CD4-positive, alpha-beta T cell (primary cell): ENCODE measurements at regions of chr11 and their contacts with region 1.

Region 1: GRCh38 chr11:6619004-6619745 is at the start of gene TPP1:
- DNase-seq: peak; percentile 73 to 96 (median 84)
- ATAC-seq: peak; percentile 92
- H3K4me3 ChIP-seq: peak within 1 kb of the TSS; percentile 85
- H3K4me3 Mint-ChIP-seq: no peak within 1 kb of the TSS
- H3K27ac ChIP-seq: peak within 1 kb of the TSS; percentile 73 to 94
- H3K27ac Mint-ChIP-seq: no peak within 1 kb of the TSS
- H3K4me1 ChIP-seq: peaks cover 30% of the 10 kb centered on the region
- H3K4me1 Mint-ChIP-seq: peaks cover 8% of the 10 kb centered on the region
- H3K27me3 ChIP-seq: no peaks in the 10 kb centered on the region
- H3K27me3 Mint-ChIP-seq: no peaks in the 10 kb centered on the region
- CTCF ChIP-seq: no peak
- total RNA-seq, gene TPP1: 29.7 to 34.4 TPM

Region 2: DNA sequence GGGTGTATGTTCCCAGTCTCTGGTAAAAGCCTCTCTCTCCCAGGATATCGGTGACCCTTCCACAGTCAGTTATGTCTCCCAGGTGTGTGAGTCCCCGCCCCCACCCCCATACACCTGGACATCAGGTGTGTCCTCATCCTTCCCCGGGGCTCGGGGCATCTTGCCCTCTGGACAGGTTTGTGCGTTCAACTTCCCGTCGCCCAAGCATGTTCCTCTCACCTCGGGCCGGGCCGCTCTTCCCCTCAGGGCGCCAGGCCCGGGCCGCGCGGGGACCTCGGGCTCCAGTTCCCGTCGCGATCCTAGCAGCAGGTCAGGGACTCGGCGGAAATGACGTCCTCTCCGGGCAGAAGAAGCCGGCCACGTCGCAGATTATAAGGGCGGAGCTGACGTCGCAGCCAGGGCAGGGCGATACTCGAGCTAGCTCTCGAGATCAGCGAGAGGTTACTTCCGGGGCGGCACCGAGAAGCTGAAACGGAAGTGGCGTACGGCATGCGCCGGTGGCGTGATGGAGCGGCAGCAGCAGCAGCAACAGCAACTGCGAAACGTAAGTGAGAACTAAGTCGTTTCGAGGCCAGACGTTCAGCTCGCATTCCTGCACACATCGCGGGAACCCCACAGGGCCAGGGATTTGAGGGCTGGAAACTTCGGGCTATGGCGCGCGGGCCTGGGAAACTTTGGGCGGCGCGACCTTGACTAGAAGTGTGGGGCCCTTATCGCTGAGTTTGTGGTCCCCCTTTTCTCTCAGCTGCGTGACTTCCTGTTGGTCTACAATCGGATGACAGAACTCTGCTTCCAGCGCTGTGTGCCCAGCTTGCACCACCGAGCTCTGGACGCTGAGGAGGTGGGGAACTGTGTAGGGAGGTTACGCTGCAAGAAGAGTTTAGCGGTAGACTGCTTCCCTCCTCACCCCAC is 137.9 kb before region 1 on chr11 and contains the starts of genes ARFIP2 and TIMM10B:
- CTCF ChIA-PET with region 1: no interaction called
- POLR2A ChIA-PET with region 1: interaction called, 6 read pairs
- intact Hi-C with region 1: loop called in 1 of 2 experiments (anchors 5 kb)
- DNase-seq: peak; percentile 92 to 99 (median 96)
- ATAC-seq: peak; percentile 94
- H3K4me3 ChIP-seq: peak within 1 kb of the TSS; percentile 83
- H3K4me3 Mint-ChIP-seq: peak within 1 kb of the TSS; percentile 98
- H3K27ac ChIP-seq: peak within 1 kb of the TSS; percentile 87 to 95
- H3K27ac Mint-ChIP-seq: peak within 1 kb of the TSS; percentile 99
- H3K4me1 ChIP-seq: peaks cover 39% of the 10 kb centered on the region
- H3K4me1 Mint-ChIP-seq: peaks cover 42% of the 10 kb centered on the region
- H3K27me3 ChIP-seq: no peaks in the 10 kb centered on the region
- H3K27me3 Mint-ChIP-seq: no peaks in the 10 kb centered on the region
- CTCF ChIP-seq: no peak
- total RNA-seq, gene ARFIP2: 78.1 to 80.5 TPM
- total RNA-seq, gene TIMM10B: 68.5 to 68.6 TPM

Region 3: DNA sequence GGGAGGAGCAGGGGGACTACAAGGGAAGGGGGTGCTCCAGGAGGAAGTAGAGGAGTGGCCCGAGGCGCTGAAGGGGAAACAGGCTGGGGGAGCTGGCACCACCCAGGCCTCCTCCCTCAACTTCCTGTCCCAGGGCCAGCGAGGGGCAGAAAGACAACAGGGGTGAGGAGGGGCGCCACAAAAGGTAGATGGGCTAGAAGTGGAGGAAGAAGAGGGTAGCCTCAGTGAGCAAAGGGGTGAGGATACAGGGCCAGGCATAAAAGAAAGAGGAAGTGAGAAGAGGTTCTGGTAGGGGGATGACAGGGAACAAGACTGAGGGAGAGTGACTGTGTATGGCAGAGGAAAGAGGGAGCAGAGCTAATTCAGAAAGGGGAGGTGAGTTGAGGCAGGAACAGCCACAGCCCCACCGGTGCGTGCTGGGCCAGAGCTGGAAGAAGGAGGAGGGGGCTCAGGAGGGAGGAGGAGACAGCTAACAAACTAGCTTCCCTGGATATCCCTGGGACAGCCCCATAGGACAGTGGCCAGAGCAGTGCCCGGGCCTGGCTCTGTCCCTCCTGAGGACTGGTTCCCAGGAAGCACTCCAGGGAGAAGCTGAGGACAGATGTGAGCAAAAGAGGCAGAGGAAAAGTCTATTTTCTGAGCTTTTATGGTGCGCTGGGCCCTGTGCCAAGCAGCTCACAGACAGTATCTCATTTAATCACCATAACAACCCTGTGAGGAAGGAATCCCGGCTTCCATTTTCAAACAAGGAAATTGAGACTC is 27.9 kb after region 1 on chr11:
- CTCF ChIA-PET with region 1: interaction called, 3 read pairs
- POLR2A ChIA-PET with region 1: interaction called, 41 read pairs
- intact Hi-C with region 1: no loop called
- DNase-seq: peak in 9 of 14 experiments; percentile 18 to 64 (median 42)
- ATAC-seq: peak; percentile 70
- H3K4me3 ChIP-seq: peak overlapping the region; percentile 22
- H3K4me3 Mint-ChIP-seq: no peak overlapping the region
- H3K27ac ChIP-seq: peak overlapping the region; percentile 72 to 76
- H3K27ac Mint-ChIP-seq: no peak overlapping the region
- H3K4me1 ChIP-seq: peaks cover 52% of the 10 kb centered on the region
- H3K4me1 Mint-ChIP-seq: no peaks in the 10 kb centered on the region
- H3K27me3 ChIP-seq: no peaks in the 10 kb centered on the region
- H3K27me3 Mint-ChIP-seq: no peaks in the 10 kb centered on the region
- CTCF ChIP-seq: no peak

Region 4: DNA sequence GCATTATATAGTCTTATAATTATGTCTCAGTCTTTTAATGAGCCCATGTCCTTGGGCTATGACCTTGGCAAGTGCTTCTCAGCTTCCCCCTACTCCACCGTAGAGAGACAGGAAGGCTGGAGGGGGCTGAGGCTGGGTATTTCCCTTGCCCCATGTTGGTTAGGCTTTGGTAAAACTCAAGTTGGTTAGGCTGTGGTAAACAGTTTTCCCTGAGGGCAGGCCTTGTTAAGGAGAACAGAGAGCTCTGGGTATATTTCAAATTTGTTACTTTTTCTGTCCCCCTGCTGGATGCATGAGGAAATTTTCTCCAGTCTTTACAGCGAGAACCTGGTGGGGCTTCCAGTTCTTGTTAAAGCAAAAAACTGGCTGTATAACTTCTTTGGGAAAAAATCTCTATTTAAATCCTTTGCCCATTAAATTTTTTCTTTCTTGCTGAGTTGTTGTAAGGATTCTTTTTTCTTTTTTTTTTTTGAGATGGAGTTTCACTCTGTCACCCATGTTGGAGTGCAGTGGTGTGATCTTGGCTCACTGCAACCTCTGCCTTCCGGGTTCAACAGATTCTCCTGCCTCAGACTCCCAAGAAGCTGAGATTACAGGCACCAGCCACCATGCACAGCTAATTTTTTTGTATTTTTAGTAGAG is 48.7 kb after region 1 on chr11:
- CTCF ChIA-PET with region 1: interaction called, 15 read pairs
- POLR2A ChIA-PET with region 1: interaction called, 17 read pairs
- intact Hi-C with region 1: loop called in 1 of 2 experiments (anchors 2 kb)
- DNase-seq: peak in 6 of 14 experiments; percentile 12 to 82 (median 58)
- ATAC-seq: peak; percentile 80
- H3K4me3 ChIP-seq: no peak overlapping the region
- H3K4me3 Mint-ChIP-seq: no peak overlapping the region
- H3K27ac ChIP-seq: peak overlapping the region in 1 of 2 donors; percentile 35
- H3K27ac Mint-ChIP-seq: peak overlapping the region; percentile 41
- H3K4me1 ChIP-seq: peaks cover 32% of the 10 kb centered on the region
- H3K4me1 Mint-ChIP-seq: peaks cover 52% of the 10 kb centered on the region
- H3K27me3 ChIP-seq: no peaks in the 10 kb centered on the region
- H3K27me3 Mint-ChIP-seq: no peaks in the 10 kb centered on the region
- CTCF ChIP-seq: peak; percentile 67

Region 5: DNA sequence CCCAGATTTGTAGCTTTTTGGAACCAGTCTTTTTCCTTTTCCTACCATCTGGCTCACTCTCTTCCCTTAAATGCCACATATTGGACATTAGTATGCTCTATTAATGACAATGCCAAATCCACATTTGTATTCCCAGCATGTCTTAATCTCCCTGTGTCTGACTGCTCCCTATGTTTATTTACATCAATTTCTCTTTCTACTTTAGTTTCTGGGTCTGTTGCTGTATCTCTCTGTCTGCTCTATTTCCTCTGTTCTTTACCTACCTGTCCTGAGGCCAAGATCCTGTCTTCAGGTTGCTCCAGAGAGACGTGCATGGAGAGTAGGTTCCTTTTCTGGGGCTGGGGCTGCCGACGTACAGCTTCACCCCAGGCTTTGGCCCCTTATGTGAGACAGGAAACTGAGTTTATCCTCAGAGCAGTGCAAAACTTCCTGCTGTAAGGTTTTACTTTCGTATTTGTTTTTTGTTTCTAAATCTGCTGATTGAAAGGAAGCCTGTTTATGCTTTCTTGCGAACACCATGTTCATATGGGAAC is 127.0 kb after region 1 on chr11:
- CTCF ChIA-PET with region 1: interaction called, 3 read pairs
- POLR2A ChIA-PET with region 1: interaction called, 18 read pairs
- intact Hi-C with region 1: no loop called
- DNase-seq: peak in 13 of 14 experiments; percentile 19 to 84 (median 45)
- ATAC-seq: peak; percentile 81
- H3K4me3 ChIP-seq: peak overlapping the region; percentile 69
- H3K4me3 Mint-ChIP-seq: no peak overlapping the region
- H3K27ac ChIP-seq: peak overlapping the region; percentile 84 to 93
- H3K27ac Mint-ChIP-seq: no peak overlapping the region
- H3K4me1 ChIP-seq: peaks cover 17% of the 10 kb centered on the region
- H3K4me1 Mint-ChIP-seq: peaks cover 40% of the 10 kb centered on the region
- H3K27me3 ChIP-seq: no peaks in the 10 kb centered on the region
- H3K27me3 Mint-ChIP-seq: no peaks in the 10 kb centered on the region
- CTCF ChIP-seq: no peak